ENCODE measurements at regions of chr2 and their contacts with region 1.

Region 1: GRCh38 chr2:101012706-101013181 is 10.7 kb downstream of the RPL31 start:
- DNase-seq: peak in 4 of 5 donors; percentile 24 to 51 (median 37)
- H3K4me3 ChIP-seq: no peak overlapping the region
- H3K4me3 Mint-ChIP-seq: no peak overlapping the region
- H3K27ac ChIP-seq: no peak overlapping the region
- H3K27ac Mint-ChIP-seq: peak overlapping the region in 2 of 7 donors; percentile 30 to 55
- H3K4me1 ChIP-seq: no peaks in the 10 kb centered on the region
- H3K4me1 Mint-ChIP-seq: peaks cover 8 to 18% (median 12%) of the 10 kb centered on the region in 4 donors
- H3K27me3 ChIP-seq: no peaks in the 10 kb centered on the region
- H3K27me3 Mint-ChIP-seq: no peaks in the 10 kb centered on the region

Region 2: DNA sequence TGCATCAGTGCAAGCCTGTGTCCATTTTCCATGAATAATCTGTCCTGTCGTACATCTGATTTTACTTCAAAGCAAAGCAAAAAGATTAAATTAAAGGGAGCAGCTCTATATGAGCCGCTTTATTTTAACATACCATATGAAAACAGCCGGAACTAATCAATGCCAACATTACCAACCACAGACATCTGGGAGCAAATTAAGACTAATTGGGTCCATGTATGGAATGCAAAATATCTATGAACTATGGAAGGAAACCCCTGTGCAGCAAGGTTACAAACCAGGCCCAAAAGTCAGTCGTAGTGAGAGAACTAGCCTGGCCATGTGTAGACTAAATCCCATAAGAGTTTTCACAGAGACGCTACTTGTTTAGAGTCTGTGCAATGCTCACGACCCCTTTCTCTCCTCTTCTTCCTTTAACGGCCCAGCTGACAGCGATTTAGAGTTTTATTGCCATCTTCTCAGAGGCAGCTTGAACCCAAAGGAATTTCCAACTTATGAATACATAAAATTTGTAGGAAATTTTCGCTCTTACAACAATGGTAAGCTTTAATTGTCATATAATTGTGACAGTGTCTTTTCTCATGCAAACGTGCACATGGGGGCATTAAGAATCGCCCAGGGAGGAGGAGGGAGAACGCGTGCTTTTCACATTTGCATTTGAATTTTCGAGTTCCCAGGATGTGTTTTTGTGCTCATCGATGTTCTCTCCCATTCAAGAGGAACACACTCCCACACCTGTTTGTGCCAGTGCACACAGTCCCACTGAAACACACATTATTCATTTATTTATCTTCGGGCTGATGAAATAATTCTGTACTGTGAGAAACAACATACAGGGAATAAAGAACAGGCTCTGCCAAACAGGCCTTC is 63.6 kb before region 1 on chr2:
- CTCF ChIA-PET with region 1: no interaction called
- POLR2A ChIA-PET with region 1: no interaction called
- intact Hi-C with region 1: no loop called
- DNase-seq: no peak
- H3K4me3 ChIP-seq: no peak overlapping the region
- H3K4me3 Mint-ChIP-seq: no peak overlapping the region
- H3K27ac ChIP-seq: no peak overlapping the region
- H3K27ac Mint-ChIP-seq: no peak overlapping the region
- H3K4me1 ChIP-seq: peaks cover 6% of the 10 kb centered on the region
- H3K4me1 Mint-ChIP-seq: peaks cover 0 to 9% (median 0%) of the 10 kb centered on the region in 4 donors
- H3K27me3 ChIP-seq: no peaks in the 10 kb centered on the region
- H3K27me3 Mint-ChIP-seq: peaks cover 2% of the 10 kb centered on the region in 2 donors

Region 3: DNA sequence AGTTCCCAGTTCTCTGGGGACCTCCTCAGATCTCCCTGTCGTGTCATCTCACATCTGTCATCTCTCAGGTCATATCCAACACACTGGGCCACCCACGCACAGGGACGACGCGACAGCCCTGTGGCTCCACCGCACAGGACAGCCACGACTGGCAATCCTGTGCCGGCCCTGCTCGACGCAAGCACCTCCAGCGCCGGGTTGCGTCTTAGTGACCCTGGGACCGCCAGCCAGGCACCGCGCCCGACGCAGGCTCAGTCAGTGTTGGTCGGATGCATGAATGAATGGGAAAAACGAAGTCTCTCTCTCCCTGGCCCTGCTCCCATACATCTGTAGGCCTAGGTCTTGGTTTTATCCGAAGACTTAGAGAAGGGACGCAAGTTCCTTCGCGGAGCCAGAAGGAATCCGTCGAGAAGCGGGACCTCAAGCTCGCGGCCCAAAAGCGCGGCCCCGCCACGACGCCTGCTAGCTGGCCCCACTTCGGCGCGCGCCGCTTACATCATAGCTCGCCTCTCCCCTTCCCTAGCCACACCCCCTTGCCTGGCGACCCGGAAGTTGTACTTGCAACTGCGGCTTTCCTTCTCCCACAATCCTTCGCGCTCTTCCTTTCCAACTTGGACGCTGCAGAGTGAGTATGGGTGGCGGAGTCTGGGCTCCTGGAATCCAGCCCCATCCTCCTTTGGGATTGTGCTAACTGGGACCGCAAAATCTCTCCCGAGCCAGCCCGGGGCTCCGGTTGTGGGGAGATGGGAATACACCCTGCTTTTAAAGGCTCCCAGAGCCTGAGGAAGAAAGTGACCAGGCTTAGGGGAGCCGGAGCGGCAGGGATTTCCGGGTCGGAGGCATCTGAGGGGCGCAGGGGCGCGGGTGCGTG is 10.8 kb before region 1 on chr2 and contains the start of gene RPL31:
- CTCF ChIA-PET with region 1: interaction called, 38 read pairs
- POLR2A ChIA-PET with region 1: interaction called, 12 read pairs
- intact Hi-C with region 1: no loop called
- DNase-seq: peak; percentile 93 to 98 (median 96)
- H3K4me3 ChIP-seq: peak within 1 kb of the TSS; percentile 97 to 98
- H3K4me3 Mint-ChIP-seq: peak within 1 kb of the TSS; percentile 90 to 96 (median 95)
- H3K27ac ChIP-seq: peak within 1 kb of the TSS; percentile 91
- H3K27ac Mint-ChIP-seq: peak within 1 kb of the TSS; percentile 91 to 99 (median 98)
- H3K4me1 ChIP-seq: peaks cover 37% of the 10 kb centered on the region
- H3K4me1 Mint-ChIP-seq: peaks cover 32 to 51% (median 45%) of the 10 kb centered on the region in 4 donors
- H3K27me3 ChIP-seq: no peaks in the 10 kb centered on the region
- H3K27me3 Mint-ChIP-seq: no peaks in the 10 kb centered on the region
- total RNA-seq, gene RPL31: 2,455 to 2,531 TPM

Region 4: GRCh38 chr2:101151141-101151858 is 138.6 kb after region 1 on chr2 and contains the start of gene TBC1D8:
- CTCF ChIA-PET with region 1: interaction called, 4 read pairs
- POLR2A ChIA-PET with region 1: no interaction called
- intact Hi-C with region 1: loop called (anchors 2 kb)
- DNase-seq: peak; percentile 38 to 65 (median 55)
- H3K4me3 ChIP-seq: peak within 1 kb of the TSS; percentile 28 to 33
- H3K4me3 Mint-ChIP-seq: peak within 1 kb of the TSS; percentile 77 to 92 (median 86)
- H3K27ac ChIP-seq: no peak within 1 kb of the TSS
- H3K27ac Mint-ChIP-seq: peak within 1 kb of the TSS; percentile 19 to 88 (median 71)
- H3K4me1 ChIP-seq: peaks cover 19% of the 10 kb centered on the region
- H3K4me1 Mint-ChIP-seq: peaks cover 18 to 27% (median 22%) of the 10 kb centered on the region in 4 donors
- H3K27me3 ChIP-seq: no peaks in the 10 kb centered on the region
- H3K27me3 Mint-ChIP-seq: peaks cover 2 to 7% of the 10 kb centered on the region in 2 donors
- total RNA-seq, gene TBC1D8: 2.0 to 2.4 TPM

Region 5: GRCh38 chr2:101197215-101197745 is 184.5 kb after region 1 on chr2:
- CTCF ChIA-PET with region 1: interaction called, 12 read pairs
- POLR2A ChIA-PET with region 1: no interaction called
- intact Hi-C with region 1: no loop called
- DNase-seq: peak in 2 of 5 donors; percentile 9 to 10
- H3K4me3 ChIP-seq: no peak overlapping the region
- H3K4me3 Mint-ChIP-seq: no peak overlapping the region
- H3K27ac ChIP-seq: no peak overlapping the region
- H3K27ac Mint-ChIP-seq: no peak overlapping the region
- H3K4me1 ChIP-seq: no peaks in the 10 kb centered on the region
- H3K4me1 Mint-ChIP-seq: peaks cover 0 to 1% (median 0%) of the 10 kb centered on the region in 4 donors
- H3K27me3 ChIP-seq: no peaks in the 10 kb centered on the region
- H3K27me3 Mint-ChIP-seq: peaks cover 0 to 3% of the 10 kb centered on the region in 2 donors

Measured in CD4-positive, alpha-beta memory T cell (primary cell).